ENCODE measurements at regions of chr6 and their contacts with region 1.

Region 1: DNA sequence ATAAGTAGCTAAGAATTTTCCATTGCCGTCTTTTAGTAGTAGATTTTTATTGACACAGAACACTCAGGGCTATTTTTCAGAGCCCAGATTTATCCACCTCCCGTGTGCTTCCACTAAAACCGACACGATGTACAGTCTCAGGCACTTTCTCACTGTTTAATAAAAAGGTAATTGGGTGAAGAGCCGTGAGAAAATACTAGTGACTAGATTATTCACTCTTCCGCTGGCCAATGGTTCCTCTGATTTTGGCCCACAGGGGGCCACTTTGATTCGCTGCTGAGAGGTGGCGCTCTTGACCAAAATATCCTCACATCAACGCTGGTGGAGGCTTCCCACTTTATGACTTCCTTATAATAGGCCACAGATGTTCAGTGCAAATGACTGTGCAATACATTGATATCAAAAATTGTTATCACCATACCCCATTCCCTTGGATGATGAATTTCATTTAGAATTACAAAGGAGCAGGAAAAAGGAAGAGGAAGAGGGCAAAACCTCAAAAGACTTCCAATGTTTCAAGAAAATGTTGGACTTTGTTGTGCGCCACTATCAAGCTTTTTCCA is 12.3 kb upstream of the HDDC2 start:
- DNase-seq: peak; percentile 45 to 67
- ATAC-seq: peak; percentile 80 to 94 (median 86)
- H3K4me3 ChIP-seq: no peak overlapping the region
- H3K27ac ChIP-seq: no peak overlapping the region
- H3K4me1 ChIP-seq: no peaks in the 10 kb centered on the region
- H3K27me3 ChIP-seq: no peaks in the 10 kb centered on the region
- CTCF ChIP-seq: peak; percentile 85

Region 2: DNA sequence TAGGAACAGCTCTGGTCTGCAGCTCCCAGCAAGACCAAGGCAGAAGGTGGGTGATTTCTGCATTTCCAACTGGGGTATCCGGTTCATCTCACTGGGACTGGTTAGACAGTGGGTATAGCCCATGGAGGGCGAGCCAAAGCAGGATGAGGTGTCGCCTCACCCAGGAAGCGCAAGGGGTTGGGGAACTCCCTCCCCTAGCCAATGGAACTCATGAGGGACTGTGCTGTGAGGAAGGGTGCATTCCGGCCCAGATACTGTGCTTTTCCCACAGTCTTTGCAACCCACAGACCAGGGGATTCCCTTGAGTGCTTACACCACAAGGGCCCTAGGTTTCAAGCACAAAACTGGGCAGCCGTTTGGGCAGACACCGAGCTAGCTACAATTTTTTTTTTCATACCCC is 34.1 kb before region 1 on chr6:
- intact Hi-C with region 1: no loop called
- DNase-seq: no peak
- ATAC-seq: no peak
- H3K4me3 ChIP-seq: no peak overlapping the region
- H3K27ac ChIP-seq: no peak overlapping the region
- H3K4me1 ChIP-seq: no peaks in the 10 kb centered on the region
- H3K27me3 ChIP-seq: no peaks in the 10 kb centered on the region
- CTCF ChIP-seq: no peak

Region 3: DNA sequence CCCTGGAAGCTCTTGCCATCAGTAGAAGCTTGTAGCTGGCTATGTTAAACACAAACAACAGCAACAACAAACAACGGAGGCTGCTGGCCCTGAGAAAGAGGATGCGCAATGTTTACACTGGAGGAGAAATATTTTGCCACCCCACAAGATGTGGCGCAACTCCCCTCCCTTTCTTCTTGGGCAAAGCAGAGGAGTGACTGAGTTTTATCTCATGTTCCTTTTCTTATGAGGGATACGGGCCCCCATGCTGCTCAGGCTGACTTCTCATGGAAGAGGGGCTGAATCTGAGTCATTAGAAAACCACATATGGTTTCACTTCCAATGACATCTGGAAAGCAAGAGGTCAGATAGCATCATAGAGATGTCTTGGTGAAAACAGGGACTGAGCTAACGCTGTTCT is 63.5 kb after region 1 on chr6:
- intact Hi-C with region 1: no loop called
- DNase-seq: no peak
- ATAC-seq: no peak
- H3K4me3 ChIP-seq: no peak overlapping the region
- H3K27ac ChIP-seq: no peak overlapping the region
- H3K4me1 ChIP-seq: no peaks in the 10 kb centered on the region
- H3K27me3 ChIP-seq: no peaks in the 10 kb centered on the region
- CTCF ChIP-seq: no peak

Region 4: DNA sequence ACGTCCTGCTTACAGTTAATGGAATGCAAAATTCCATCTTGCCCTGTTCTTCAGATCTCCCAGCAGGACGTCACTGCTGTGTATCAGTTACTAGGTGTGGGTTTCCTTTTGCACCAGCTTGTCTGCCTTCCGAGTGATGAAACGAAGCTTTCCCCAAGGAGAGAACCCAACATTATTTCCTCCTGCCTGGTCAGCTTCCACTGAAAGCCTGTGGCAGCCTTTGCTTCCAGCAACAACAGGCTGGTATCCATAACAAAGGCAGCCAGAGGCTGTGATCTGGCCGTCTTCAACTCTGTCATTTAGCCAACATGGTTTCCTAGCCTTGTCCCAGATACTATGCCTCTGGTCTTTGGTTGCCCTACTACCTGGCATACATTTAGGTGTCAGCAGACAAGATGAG is 356.5 kb after region 1 on chr6:
- intact Hi-C with region 1: loop called in 1 of 2 experiments (anchors 10 kb)
- DNase-seq: peak in 1 of 2 donors; percentile 19
- ATAC-seq: peak; percentile 92 to 94 (median 92)
- H3K4me3 ChIP-seq: no peak overlapping the region
- H3K27ac ChIP-seq: peak overlapping the region; percentile 79
- H3K4me1 ChIP-seq: peaks cover 13% of the 10 kb centered on the region
- H3K27me3 ChIP-seq: no peaks in the 10 kb centered on the region
- CTCF ChIP-seq: no peak

Region 5: GRCh38 chr6:125764121-125764671 is 450.1 kb after region 1 on chr6:
- intact Hi-C with region 1: loop called (anchors 1 to 5 kb)
- DNase-seq: no peak
- ATAC-seq: no peak
- H3K4me3 ChIP-seq: no peak overlapping the region
- H3K27ac ChIP-seq: no peak overlapping the region
- H3K4me1 ChIP-seq: no peaks in the 10 kb centered on the region
- H3K27me3 ChIP-seq: no peaks in the 10 kb centered on the region
- CTCF ChIP-seq: no peak

Region 6: DNA sequence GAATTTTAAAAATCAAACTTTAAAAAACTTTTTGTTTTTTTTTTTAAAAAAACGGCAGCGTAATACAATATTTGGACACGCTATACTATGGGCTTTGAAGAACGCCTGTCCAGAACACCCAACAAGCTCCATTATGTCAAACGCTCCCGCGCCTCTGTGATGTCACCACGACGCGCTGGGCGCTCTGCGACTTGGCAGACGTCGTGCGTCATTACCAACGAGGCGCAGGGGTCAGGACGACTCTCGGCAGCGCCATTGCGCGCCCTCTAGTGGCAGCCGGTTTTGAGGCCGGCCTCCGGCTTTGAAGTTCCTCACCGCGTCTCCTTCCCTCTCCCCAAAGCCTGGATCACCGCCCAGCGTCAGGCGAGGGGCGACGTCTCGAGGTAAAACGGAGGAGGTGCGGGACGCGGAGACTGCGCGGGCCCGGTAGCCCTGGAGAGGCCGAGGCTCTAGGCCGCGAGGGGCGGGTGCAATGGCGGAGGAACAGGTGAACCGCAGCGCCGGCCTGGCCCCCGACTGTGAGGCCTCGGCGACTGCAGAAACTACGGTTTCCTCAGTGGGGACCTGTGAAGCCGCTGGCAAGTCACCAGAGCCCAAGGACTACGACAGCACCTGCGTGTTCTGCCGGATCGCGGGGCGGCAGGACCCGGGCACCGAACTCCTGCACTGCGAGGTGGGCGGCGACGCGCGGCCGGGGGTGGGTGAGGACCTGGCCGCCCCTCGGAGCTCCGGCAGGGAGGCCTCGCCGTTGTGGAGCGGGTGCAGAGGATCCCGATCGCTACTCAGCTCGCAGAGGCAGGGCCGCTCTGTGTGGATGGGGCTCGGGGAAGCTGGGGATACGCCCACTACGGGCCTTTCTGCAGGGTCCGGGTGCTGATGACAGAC is 642.6 kb after region 1 on chr6 and contains the start of gene HINT3:
- intact Hi-C with region 1: loop called (anchors 5 to 10 kb)
- DNase-seq: peak; percentile 98 to 99
- ATAC-seq: peak; percentile 97 to 98 (median 97)
- H3K4me3 ChIP-seq: peak within 1 kb of the TSS; percentile 97
- H3K27ac ChIP-seq: peak within 1 kb of the TSS; percentile 98
- H3K4me1 ChIP-seq: peaks cover 12% of the 10 kb centered on the region
- H3K27me3 ChIP-seq: peaks cover 0 to 10% (median 0%) of the 10 kb centered on the region in 3 donors
- CTCF ChIP-seq: peak; percentile 97
- total RNA-seq, gene HINT3: 55.2 to 79.9 (median 59.5) TPM